CD8-positive, alpha-beta T cell (primary cell): ENCODE measurements at regions of chr21 and their contacts with region 1.

Region 1: DNA sequence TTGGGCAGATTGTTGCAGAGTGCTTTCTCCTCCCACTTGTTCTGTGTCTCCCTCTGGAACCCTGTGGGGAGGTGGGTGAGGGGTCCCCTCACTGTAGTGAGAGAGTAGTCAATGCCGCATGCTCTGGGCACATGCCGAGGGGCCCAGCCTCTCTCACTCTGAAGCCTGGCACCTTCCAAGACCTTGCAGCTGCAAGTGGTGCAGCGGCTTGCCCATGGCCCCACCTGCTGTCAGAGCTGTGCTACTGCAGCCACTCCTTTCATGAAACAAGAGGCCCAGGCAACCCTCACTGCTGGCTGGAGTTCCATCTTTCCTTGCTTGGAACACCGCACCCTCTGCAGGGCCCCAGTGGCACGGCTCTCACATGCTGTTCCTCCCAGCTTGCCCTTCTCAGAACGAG is 58.4 kb upstream of the COL6A1 start:
- DNase-seq: peak; percentile 49 to 83 (median 75)
- ATAC-seq: peak; percentile 100
- H3K4me3 ChIP-seq: no peak overlapping the region
- H3K4me3 Mint-ChIP-seq: no peak overlapping the region
- H3K27ac ChIP-seq: no peak overlapping the region
- H3K27ac Mint-ChIP-seq: no peak overlapping the region
- H3K4me1 ChIP-seq: peaks cover 18% of the 10 kb centered on the region
- H3K4me1 Mint-ChIP-seq: peaks cover 19% of the 10 kb centered on the region
- H3K27me3 ChIP-seq: no peaks in the 10 kb centered on the region
- H3K27me3 Mint-ChIP-seq: no peaks in the 10 kb centered on the region
- CTCF ChIP-seq: peak; percentile 84

Region 2: DNA sequence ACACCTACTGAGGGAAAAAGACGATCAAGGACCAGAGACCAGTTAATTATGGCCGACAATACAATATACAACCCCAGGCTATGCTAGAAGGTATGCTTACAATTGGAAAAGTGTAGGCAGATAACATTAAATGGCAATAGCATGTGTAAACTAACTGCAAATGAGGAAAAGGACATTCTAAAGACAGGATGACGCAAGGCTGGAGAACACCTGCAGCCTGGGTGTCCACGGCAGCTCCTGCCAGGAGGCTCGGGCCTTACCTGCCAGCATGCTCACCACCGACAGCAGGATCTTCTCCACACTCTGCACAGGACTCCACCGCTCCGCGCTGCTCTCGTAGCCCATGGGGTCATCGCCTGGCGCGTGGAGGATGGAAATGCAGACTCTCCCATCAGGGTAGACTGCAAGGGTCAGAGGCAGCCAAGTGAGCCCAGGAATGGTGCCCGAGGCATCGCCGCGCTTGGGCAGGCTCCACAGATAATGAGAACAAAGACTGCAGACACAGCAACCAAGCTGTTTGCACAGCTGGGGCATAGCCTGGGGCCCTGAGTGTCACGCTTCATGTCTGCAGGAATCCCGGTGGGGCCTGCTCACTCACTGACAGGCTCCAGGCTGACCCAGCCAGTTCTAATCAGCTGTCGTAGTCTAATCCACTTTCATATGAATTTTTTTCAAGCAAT is 1149.7 kb before region 1 on chr21:
- CTCF ChIA-PET with region 1: no interaction called
- POLR2A ChIA-PET with region 1: no interaction called
- intact Hi-C with region 1: no loop called
- DNase-seq: no peak
- ATAC-seq: no peak
- H3K4me3 ChIP-seq: no peak overlapping the region
- H3K4me3 Mint-ChIP-seq: no peak overlapping the region
- H3K27ac ChIP-seq: no peak overlapping the region
- H3K27ac Mint-ChIP-seq: no peak overlapping the region
- H3K4me1 ChIP-seq: no peaks in the 10 kb centered on the region
- H3K4me1 Mint-ChIP-seq: peaks cover under 1% of the 10 kb centered on the region
- H3K27me3 ChIP-seq: no peaks in the 10 kb centered on the region
- H3K27me3 Mint-ChIP-seq: no peaks in the 10 kb centered on the region
- CTCF ChIP-seq: no peak

Region 3: DNA sequence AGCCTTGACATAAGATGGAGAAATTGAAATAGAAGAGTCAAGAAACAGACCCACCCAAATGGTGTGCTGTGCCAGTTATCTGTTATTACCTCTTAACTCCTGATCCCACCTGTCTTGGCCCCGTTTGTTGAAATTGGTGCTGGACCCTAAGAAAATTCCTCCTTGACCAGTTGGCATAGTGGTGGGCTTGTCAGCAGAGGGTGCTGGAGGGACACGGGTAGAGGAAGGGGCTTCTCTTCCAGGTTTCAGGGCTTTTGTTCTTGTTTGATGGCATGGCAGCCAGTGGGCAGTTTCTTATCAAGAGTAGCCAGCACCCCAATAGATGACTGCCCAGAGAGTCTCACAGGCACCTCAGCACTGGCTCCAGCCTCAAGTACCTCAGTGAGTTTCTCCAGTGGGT is 228.1 kb before region 1 on chr21:
- CTCF ChIA-PET with region 1: no interaction called
- POLR2A ChIA-PET with region 1: no interaction called
- intact Hi-C with region 1: loop called in 1 of 2 experiments (anchors 2 kb)
- DNase-seq: no peak
- ATAC-seq: no peak
- H3K4me3 ChIP-seq: no peak overlapping the region
- H3K4me3 Mint-ChIP-seq: no peak overlapping the region
- H3K27ac ChIP-seq: no peak overlapping the region
- H3K27ac Mint-ChIP-seq: no peak overlapping the region
- H3K4me1 ChIP-seq: peaks cover 15% of the 10 kb centered on the region
- H3K4me1 Mint-ChIP-seq: peaks cover 22% of the 10 kb centered on the region
- H3K27me3 ChIP-seq: no peaks in the 10 kb centered on the region
- H3K27me3 Mint-ChIP-seq: no peaks in the 10 kb centered on the region
- CTCF ChIP-seq: no peak

Region 4: GRCh38 chr21:45830221-45830640 is 92.9 kb before region 1 on chr21:
- CTCF ChIA-PET with region 1: no interaction called
- POLR2A ChIA-PET with region 1: no interaction called
- intact Hi-C with region 1: no loop called
- DNase-seq: no peak
- ATAC-seq: no peak
- H3K4me3 ChIP-seq: no peak overlapping the region
- H3K4me3 Mint-ChIP-seq: no peak overlapping the region
- H3K27ac ChIP-seq: no peak overlapping the region
- H3K27ac Mint-ChIP-seq: no peak overlapping the region
- H3K4me1 ChIP-seq: peaks cover 13% of the 10 kb centered on the region
- H3K4me1 Mint-ChIP-seq: peaks cover 11% of the 10 kb centered on the region
- H3K27me3 ChIP-seq: no peaks in the 10 kb centered on the region
- H3K27me3 Mint-ChIP-seq: no peaks in the 10 kb centered on the region
- CTCF ChIP-seq: no peak

Region 5: DNA sequence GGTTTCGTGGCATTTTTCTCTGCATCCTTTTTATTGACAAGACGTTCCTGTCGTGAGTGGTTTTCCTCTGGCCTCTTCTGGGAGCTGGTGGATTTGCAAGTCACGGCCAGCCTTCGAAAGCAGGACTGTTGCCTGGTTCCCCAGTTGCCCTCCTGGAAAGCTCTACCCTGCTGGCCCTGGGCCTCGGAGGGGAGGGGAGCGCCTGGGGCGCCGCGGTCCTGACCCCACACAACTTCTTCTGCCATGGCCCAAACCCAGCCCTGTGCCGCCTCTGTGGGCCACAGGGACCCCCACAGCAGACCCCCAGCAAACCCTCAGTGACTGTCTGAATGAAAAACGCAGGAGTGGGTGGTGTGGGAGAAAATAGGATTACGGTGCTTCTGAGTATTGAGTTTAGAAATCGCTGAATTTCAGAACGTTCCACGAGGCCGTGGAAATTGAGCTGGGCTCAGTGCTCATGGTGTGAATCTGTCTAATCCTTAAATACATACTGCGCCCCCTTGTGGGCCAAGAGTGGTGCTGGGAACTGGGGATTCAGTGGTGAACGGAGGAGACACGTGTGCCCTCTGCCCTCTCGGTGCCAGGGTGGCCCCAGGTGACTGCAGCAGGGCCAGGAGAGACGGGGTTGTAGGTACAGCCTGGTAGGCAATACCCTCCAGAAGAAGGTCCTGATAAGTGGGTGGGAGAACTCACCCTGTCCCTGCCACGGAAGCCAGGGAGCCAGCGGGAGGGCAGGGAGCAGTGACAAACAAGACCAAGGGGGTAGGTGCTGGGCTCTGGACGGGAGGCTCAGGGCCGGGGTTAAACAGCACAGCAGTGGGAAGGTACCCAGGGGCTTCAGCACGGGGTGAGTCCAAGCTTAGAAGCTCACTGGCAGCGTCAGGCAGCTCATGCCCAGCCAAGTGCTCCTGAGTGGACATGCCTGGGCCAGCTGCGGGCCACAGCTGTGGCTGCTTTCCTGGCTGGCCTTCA is 42.8 kb before region 1 on chr21:
- CTCF ChIA-PET with region 1: interaction called, 11 read pairs
- POLR2A ChIA-PET with region 1: no interaction called
- intact Hi-C with region 1: loop called (anchors 1 kb)
- DNase-seq: peak; percentile 38 to 79 (median 71)
- ATAC-seq: peak; percentile 86
- H3K4me3 ChIP-seq: no peak overlapping the region
- H3K4me3 Mint-ChIP-seq: peak overlapping the region; percentile 13
- H3K27ac ChIP-seq: no peak overlapping the region
- H3K27ac Mint-ChIP-seq: peak overlapping the region; percentile 76
- H3K4me1 ChIP-seq: peaks cover 29% of the 10 kb centered on the region
- H3K4me1 Mint-ChIP-seq: peaks cover 48% of the 10 kb centered on the region
- H3K27me3 ChIP-seq: peaks cover 0 to 4% of the 10 kb centered on the region in 2 experiments
- H3K27me3 Mint-ChIP-seq: peaks cover 4% of the 10 kb centered on the region
- CTCF ChIP-seq: peak; percentile 73

Region 6: DNA sequence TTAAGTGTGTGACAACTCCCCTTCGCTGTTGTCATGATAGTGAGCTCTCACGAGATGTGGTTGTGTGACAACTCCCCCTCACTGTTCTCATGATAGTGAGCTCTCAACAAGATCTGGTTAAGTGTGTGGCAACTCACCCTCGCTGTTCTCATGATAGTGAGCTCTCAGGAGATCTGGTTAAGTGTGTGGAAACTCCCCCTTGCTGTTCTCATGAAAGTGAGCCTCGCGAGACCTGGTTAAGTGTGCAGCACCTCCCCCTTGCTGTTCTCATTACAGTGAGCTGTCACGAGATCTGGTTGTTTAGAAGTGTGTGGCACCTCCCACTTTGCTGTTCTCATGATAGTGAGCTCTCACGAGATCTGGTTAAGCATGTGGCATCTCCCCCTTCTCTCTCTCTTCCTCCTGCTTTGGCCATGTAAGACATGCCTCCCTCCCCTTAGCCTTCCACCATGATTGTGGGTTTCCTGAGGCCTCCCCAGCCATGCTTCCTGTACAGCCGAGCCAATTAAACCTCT is 330.5 kb after region 1 on chr21:
- CTCF ChIA-PET with region 1: no interaction called
- POLR2A ChIA-PET with region 1: no interaction called
- intact Hi-C with region 1: no loop called
- DNase-seq: peak in 6 of 9 experiments; percentile 9 to 84 (median 48)
- ATAC-seq: peak; percentile 92
- H3K4me3 ChIP-seq: no peak overlapping the region
- H3K4me3 Mint-ChIP-seq: no peak overlapping the region
- H3K27ac ChIP-seq: peak overlapping the region in 1 of 2 experiments; percentile 71
- H3K27ac Mint-ChIP-seq: peak overlapping the region; percentile 84
- H3K4me1 ChIP-seq: peaks cover 21% of the 10 kb centered on the region
- H3K4me1 Mint-ChIP-seq: peaks cover 35% of the 10 kb centered on the region
- H3K27me3 ChIP-seq: no peaks in the 10 kb centered on the region
- H3K27me3 Mint-ChIP-seq: no peaks in the 10 kb centered on the region
- CTCF ChIP-seq: no peak